Naive thymus-derived CD8-positive, alpha-beta T cell (primary cell): ENCODE measurements at regions of chr14 and their contacts with region 1.

Region 1: GRCh38 chr14:105086833-105087307 is 21.6 kb upstream of the GPR132 start:
- DNase-seq: peak; percentile 74 to 91 (median 84)
- ATAC-seq: peak; percentile 86 to 89
- H3K4me3 Mint-ChIP-seq: peak overlapping the region; percentile 74 to 86 (median 79)
- H3K27ac Mint-ChIP-seq: peak overlapping the region in 8 of 10 donors; percentile 75 to 92 (median 84)
- H3K4me1 Mint-ChIP-seq: peaks cover 14 to 33% (median 25%) of the 10 kb centered on the region in 4 donors
- H3K27me3 Mint-ChIP-seq: no peaks in the 10 kb centered on the region

Region 2: GRCh38 chr14:105053996-105054395 is 32.9 kb before region 1 on chr14:
- POLR2A ChIA-PET with region 1: interaction called, 234 read pairs
- DNase-seq: peak in 1 of 10 donors; percentile 55
- ATAC-seq: no peak
- H3K4me3 Mint-ChIP-seq: no peak overlapping the region
- H3K27ac Mint-ChIP-seq: peak overlapping the region in 7 of 10 donors; percentile 33 to 81 (median 69)
- H3K4me1 Mint-ChIP-seq: peaks cover 11 to 25% (median 21%) of the 10 kb centered on the region in 4 donors
- H3K27me3 Mint-ChIP-seq: no peaks in the 10 kb centered on the region

Region 3: DNA sequence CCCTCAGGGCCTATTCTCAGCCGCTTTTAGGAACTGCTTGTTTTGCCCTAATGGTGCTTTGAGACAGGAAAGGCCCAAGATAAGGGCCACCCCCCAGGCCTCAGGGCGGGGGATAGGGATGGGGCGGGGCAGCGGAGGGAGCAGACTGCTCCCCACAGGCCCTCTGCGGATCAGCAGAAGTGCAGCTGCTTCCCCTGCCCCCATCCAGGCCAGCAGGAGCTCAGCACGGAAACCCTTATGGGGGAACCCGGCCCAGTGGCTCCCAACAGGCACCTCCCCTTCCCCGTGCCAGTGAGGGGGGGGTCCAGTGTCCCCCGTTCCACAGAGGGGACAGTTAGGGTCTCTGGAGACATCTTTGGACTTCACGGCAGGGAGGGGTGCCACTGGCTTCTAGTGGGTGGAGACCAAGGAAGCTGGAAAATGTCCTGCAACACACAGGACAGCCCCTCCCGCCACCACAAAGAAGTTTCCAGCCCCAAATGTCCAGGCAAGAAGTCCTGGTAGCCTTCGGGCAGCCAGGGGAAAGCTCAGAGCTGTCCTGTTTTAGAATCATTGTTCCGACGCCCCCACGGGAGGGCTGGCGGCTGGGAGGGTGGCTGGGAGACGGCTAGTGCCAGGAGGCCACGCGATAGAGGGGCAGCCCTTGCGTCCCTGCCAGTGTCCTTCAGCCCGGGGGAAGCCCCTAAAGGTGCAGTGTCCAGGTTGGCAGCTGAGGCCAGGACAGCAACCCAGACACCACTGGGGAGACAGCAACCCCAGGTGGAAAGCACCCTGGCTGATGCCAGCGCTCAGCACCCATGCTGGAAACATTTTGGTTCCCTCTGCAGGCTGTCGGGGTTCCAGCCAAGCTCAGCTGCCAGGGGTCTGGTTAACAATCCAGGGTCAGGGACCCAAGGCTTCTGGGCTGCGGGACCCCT is 11.2 kb before region 1 on chr14:
- POLR2A ChIA-PET with region 1: interaction called, 95 read pairs
- DNase-seq: peak in 5 of 10 donors; percentile 32 to 73 (median 49)
- ATAC-seq: peak; percentile 68 to 70
- H3K4me3 Mint-ChIP-seq: peak overlapping the region; percentile 4 to 85 (median 62)
- H3K27ac Mint-ChIP-seq: peak overlapping the region; percentile 53 to 94 (median 88)
- H3K4me1 Mint-ChIP-seq: peaks cover 21 to 64% (median 55%) of the 10 kb centered on the region in 4 donors
- H3K27me3 Mint-ChIP-seq: no peaks in the 10 kb centered on the region

Region 4: DNA sequence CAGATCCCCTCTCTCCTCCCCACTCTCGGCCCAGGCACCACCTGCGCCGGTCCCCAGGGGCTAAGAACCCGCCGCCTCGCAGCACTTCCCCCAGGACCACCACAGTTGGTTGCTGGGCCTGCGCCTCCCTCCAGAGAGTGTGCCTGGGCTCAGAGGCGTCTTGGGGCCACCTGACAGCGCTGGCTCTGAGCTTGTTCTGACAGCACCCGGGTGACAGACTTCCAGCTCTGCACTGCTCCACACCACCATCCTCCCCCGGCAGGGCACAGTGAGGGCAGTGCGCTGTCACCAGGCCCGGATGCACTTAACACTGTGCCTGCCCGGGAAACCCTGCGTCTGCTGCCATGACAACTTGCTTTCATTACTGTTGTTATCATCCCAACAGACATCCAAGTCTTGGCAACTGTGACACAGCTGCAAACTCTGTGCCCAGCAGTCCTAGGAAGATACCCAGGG is 207.3 kb after region 1 on chr14:
- POLR2A ChIA-PET with region 1: no interaction called
- DNase-seq: peak; percentile 52 to 90 (median 70)
- ATAC-seq: peak; percentile 95 to 96
- H3K4me3 Mint-ChIP-seq: peak overlapping the region; percentile 62 to 89 (median 76)
- H3K27ac Mint-ChIP-seq: peak overlapping the region; percentile 92 to 99 (median 99)
- H3K4me1 Mint-ChIP-seq: peaks cover 21 to 63% (median 47%) of the 10 kb centered on the region in 4 donors
- H3K27me3 Mint-ChIP-seq: no peaks in the 10 kb centered on the region